Gastrocnemius medialis (tissue), 4 donors: ENCODE measurements at regions of chrX and their contacts with region 1.

Region 1: DNA sequence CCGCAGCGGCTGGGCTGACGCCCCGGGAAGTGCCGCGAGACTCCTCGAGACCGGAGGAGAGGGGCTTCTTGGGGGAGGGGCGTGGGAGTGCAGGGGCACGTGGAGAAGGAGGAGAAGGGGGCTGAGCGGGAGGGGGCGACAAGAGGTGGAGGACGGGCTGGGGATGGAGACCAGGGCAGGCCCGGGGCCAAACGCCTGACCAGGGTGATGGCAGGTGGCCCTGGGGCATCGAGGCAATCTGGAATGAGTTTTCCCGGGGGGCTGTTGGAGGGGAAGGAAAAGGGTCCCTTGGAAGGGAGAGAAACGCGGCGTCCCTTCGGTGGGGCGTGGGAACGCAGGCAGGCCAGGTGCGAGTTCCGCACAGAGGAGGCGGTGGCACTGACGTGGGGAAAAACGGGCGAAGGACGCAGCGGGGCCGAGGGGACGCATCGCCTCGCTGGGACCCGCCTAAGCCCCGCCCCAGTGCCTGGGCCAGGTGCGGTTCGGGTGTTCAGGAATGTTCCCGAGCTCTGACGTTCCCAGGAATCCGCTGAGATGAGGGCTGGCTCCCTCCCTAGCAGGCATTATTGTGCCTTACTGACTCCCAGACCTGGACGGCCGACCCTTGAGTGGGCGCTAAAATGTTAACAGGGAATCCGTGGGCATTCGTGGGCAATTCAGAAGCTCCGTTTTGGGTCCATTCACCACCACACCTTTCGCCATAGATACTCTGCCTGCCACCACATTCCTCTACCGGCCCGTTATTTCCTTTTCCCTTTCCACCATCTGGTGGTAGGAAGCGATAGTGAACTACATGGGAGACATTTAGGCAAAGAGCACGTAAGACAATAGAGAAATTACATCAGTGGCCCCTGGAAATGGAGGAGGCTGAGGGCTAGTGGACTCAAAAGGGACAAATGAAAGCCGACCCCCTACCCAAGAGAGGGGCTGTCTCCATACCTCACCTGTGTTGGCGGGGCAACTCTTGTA is 795 bp upstream of the SH3KBP1 start:
- DNase-seq: peak in 1 of 2 donors; percentile 17
- ATAC-seq: peak; percentile 82 to 87
- H3K4me3 ChIP-seq: peak overlapping the region; percentile 46 to 62 (median 60)
- H3K27ac ChIP-seq: peak overlapping the region in 3 of 4 donors; percentile 40 to 48 (median 47)
- H3K4me1 ChIP-seq: no peaks in the 10 kb centered on the region
- H3K27me3 ChIP-seq: no peaks in the 10 kb centered on the region
- CTCF ChIP-seq: peak; percentile 47 to 57 (median 50)
- POLR2A ChIP-seq: no peak

Region 2: DNA sequence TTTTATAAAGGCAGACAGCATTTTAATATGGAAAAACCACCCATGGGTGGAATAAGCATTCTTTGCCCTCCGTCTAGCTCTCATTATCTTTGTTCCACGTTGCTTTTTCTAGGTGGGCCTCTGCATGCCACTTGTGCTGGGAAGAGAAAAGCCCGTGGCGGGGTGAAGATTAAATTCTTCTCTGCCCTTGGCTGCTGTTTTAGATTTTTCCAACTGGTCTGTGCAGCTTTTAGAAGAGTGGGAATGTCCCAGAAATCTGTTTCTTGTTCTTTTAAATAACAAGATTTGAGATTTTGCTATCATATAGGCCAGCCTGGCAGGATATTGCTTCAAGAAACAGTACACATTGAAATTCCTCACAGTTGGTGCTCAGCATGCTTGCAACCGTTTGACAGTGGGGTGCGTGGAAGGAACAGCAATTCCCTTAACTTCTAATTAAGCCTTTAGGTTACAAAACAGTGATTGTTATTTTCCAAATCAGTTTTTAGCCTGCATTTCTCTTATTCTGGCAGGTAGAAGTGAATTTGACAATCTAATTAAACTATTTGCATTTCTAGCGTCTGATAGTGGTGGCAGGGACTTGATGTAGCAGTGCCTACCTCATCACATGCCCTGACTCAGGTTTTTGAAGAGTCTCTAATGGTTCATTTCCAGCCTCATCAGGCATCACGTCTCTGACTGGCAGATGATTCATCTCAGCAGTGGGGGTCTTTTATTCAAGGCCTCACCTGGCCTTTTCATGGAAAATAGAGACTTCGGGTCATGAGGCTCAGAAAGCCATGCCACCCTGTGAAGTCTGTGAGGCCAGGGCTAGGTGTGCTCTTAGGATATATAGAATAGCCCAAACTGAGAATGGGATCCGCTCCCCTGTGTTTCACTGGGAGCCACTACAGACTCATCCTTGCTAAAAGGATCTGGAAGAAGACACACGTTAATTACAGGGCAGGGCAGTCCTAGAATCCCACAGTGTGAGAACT is 1130.0 kb before region 1 on chrX:
- in situ Hi-C with region 1: no loop called
- intact Hi-C with region 1: no loop called
- DNase-seq: no peak
- ATAC-seq: no peak
- H3K4me3 ChIP-seq: no peak overlapping the region
- H3K27ac ChIP-seq: no peak overlapping the region
- H3K4me1 ChIP-seq: no peaks in the 10 kb centered on the region
- H3K27me3 ChIP-seq: no peaks in the 10 kb centered on the region
- CTCF ChIP-seq: no peak
- POLR2A ChIP-seq: no peak

Region 3: DNA sequence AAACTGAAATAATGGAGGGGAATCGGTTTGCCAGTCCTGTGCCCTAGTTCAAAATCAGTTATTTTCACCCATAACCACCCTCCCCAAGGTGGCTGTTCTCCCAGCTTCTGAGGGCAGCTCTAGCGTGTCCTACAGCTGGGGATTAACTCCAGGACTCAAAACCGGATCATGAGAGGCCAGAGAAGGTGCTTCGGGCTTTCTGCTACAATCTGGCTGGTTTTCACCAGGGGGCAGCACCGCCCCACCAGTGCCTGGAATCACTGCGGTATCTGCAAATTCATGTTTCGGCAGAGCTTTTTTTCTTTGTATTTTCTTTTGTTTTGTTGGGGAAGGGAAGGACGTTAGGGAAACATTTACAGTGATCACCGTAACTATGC is 516.0 kb before region 1 on chrX:
- in situ Hi-C with region 1: loop called in 2 of 4 experiments (anchors 25 kb)
- intact Hi-C with region 1: loop called (anchors 5 kb)
- DNase-seq: peak in 1 of 2 donors; percentile 31
- ATAC-seq: peak in 1 of 2 donors; percentile 61
- H3K4me3 ChIP-seq: peak overlapping the region; percentile 36 to 47 (median 36)
- H3K27ac ChIP-seq: no peak overlapping the region
- H3K4me1 ChIP-seq: peaks cover 0 to 4% of the 10 kb centered on the region in 2 donors
- H3K27me3 ChIP-seq: peaks cover 0 to 7% (median 0%) of the 10 kb centered on the region in 3 donors
- CTCF ChIP-seq: peak in 4 of 5 experiments; percentile 24 to 64 (median 45)
- POLR2A ChIP-seq: no peak

Region 4: GRCh38 chrX:19382555-19383145 is 505.5 kb before region 1 on chrX:
- in situ Hi-C with region 1: loop called in 1 of 4 experiments (anchors 25 kb)
- intact Hi-C with region 1: no loop called
- DNase-seq: no peak
- ATAC-seq: no peak
- H3K4me3 ChIP-seq: no peak overlapping the region
- H3K27ac ChIP-seq: no peak overlapping the region
- H3K4me1 ChIP-seq: no peaks in the 10 kb centered on the region
- H3K27me3 ChIP-seq: no peaks in the 10 kb centered on the region
- CTCF ChIP-seq: no peak
- POLR2A ChIP-seq: no peak

Region 5: DNA sequence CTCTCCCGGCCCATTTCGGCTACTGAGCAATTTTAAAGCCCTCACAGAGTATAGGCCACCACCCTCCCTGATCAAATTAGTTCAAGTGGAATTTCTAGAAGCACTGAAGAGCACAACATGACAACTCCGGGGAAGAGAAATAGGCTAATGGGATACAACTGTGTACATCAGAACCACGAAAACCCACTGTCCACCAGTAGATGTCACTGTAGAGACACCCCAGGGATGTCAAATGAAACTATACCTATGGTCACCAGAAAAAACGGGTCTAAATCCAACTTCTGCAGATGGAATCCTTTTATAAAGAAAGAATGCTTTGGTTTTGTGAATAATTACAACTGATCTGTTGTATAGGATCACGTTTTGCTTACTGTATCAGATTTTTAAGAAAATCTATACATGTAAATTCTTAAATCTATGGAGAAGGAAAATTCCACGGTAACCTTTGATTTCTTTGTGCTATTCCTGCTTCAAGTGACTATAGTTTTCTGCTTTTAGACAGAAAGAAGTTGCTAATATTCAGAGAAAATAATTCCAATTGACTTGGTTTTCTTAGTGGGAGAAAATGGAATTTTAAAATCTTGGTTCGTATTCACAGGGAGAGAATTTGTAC is 343.4 kb before region 1 on chrX:
- in situ Hi-C with region 1: loop called in 2 of 4 experiments (anchors 10 kb)
- intact Hi-C with region 1: loop called (anchors 2 kb)
- DNase-seq: no peak
- ATAC-seq: peak in 1 of 2 donors; percentile 74
- H3K4me3 ChIP-seq: no peak overlapping the region
- H3K27ac ChIP-seq: no peak overlapping the region
- H3K4me1 ChIP-seq: no peaks in the 10 kb centered on the region
- H3K27me3 ChIP-seq: no peaks in the 10 kb centered on the region
- CTCF ChIP-seq: peak; percentile 35 to 79 (median 53)
- POLR2A ChIP-seq: no peak

Region 6: DNA sequence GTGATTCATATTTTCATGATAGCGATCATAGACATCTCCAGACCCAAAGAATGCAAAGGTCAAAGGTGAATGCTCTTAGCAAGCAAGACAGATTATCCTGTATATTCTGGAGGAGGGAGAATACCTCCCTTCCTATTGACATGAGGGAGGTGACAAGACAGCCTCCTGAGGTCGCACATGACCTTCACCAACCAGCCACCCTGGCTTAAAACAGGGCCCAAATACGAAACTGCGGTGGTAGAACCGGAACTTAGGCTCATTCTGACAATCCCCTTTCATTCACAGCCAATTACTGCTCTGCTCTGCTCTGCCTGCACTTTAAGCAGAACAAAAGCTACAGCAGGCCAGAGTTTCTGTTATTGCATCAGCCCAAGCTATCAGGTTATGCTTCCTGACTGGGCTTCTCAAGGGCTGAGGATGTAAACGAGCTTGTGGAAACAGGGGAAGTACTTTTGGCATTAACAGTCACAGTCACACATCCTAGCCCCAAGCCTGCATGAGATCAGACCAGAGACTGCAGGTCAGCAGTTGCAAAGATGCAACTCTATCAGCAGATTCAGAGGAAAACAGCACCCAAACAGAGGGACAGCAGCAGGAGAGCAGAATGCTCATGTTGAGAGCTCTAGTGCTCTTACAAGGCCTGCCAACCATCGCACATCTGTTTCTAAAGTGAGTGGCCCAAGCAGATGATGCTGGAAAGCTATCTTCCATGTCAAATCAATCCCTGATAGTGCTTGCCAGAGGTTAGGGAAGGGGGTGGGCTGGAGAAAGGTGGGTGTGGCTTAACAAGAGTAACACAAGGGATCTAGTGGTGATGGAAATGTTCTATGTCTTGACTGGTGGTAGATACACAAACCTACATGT is 321.6 kb before region 1 on chrX:
- in situ Hi-C with region 1: loop called in 1 of 4 experiments (anchors 25 kb)
- intact Hi-C with region 1: no loop called
- DNase-seq: no peak
- ATAC-seq: peak; percentile 61 to 64
- H3K4me3 ChIP-seq: no peak overlapping the region
- H3K27ac ChIP-seq: peak overlapping the region; percentile 29 to 59 (median 58)
- H3K4me1 ChIP-seq: peaks cover 4 to 5% of the 10 kb centered on the region in 2 donors
- H3K27me3 ChIP-seq: no peaks in the 10 kb centered on the region
- CTCF ChIP-seq: no peak
- POLR2A ChIP-seq: no peak

Region 7: GRCh38 chrX:19593690-19594089 is 294.5 kb before region 1 on chrX:
- in situ Hi-C with region 1: loop called in 1 of 4 experiments (anchors 25 kb)
- intact Hi-C with region 1: loop called (anchors 2 kb)
- DNase-seq: no peak
- ATAC-seq: peak in 1 of 2 donors; percentile 42
- H3K4me3 ChIP-seq: no peak overlapping the region
- H3K27ac ChIP-seq: no peak overlapping the region
- H3K4me1 ChIP-seq: peaks cover 0 to 11% of the 10 kb centered on the region in 2 donors
- H3K27me3 ChIP-seq: no peaks in the 10 kb centered on the region
- CTCF ChIP-seq: peak in 4 of 5 experiments; percentile 20 to 43 (median 30)
- POLR2A ChIP-seq: no peak

Region 8: GRCh38 chrX:19739683-19740082 is 148.5 kb before region 1 on chrX:
- in situ Hi-C with region 1: loop called in 3 of 4 experiments (anchors 5 to 25 kb)
- intact Hi-C with region 1: loop called (anchors 1 kb)
- DNase-seq: peak in 1 of 2 donors; percentile 23
- ATAC-seq: peak in 1 of 2 donors; percentile 33
- H3K4me3 ChIP-seq: no peak overlapping the region
- H3K27ac ChIP-seq: no peak overlapping the region
- H3K4me1 ChIP-seq: no peaks in the 10 kb centered on the region
- H3K27me3 ChIP-seq: no peaks in the 10 kb centered on the region
- CTCF ChIP-seq: peak; percentile 34 to 63 (median 51)
- POLR2A ChIP-seq: no peak

Region 9: GRCh38 chrX:19836337-19836736 is 51.9 kb before region 1 on chrX:
- in situ Hi-C with region 1: no loop called
- intact Hi-C with region 1: no loop called
- DNase-seq: no peak
- ATAC-seq: no peak
- H3K4me3 ChIP-seq: no peak overlapping the region
- H3K27ac ChIP-seq: no peak overlapping the region
- H3K4me1 ChIP-seq: no peaks in the 10 kb centered on the region
- H3K27me3 ChIP-seq: no peaks in the 10 kb centered on the region
- CTCF ChIP-seq: no peak
- POLR2A ChIP-seq: no peak